Mammary epithelial cell (primary cell): ENCODE measurements at regions of chr12 and their contacts with region 1.

Region 1: DNA sequence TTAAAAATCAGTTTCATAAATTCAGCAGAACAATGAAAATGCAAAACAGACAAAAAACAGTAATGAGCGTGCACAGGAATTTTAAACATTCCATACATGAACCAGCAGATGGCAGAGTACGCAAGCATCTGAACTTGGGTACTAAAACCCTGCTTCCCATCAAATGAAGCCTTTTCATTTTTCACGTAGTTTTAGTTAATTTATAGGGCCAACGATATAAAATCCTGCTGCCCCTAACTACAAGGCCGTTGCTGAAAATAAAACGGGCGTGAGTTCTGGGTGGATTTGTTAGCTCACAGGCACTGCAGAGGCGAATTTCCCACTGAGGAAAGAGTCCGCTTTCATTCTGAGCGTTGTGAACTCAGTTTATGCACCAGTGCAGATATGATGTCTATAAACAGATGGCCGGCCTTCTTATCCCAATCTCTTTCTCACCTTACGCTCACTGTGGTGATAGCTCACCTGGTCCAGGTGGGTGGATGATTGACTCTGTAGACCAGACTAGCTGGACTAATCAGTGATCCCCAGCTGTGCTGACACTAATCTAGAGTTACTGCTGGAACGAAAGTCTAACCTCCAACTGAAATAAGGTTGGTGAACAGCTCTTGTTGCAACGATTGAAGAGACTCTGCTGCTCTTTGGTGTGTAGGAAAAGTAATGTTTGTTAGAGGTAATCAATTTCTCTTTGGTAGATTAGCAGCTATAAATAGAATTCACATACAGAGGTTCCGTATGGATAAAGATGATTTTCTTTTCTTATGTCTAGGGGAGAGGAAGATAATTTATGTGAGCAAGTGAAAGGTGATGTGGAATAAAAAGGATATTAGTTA is 89.2 kb downstream of the PDZRN4 start:
- DNase-seq: peak; percentile 9
- H3K4me3 ChIP-seq: no peak overlapping the region
- H3K27ac ChIP-seq: no peak overlapping the region
- H3K4me1 ChIP-seq: no peaks in the 10 kb centered on the region
- H3K27me3 ChIP-seq: peaks cover 2% of the 10 kb centered on the region
- CTCF ChIP-seq: peak; percentile 66 to 68

Region 2: GRCh38 chr12:41367726-41368405 is 90.5 kb after region 1 on chr12:
- CTCF ChIA-PET with region 1: no interaction called
- dilution Hi-C with region 1: no loop called
- in situ Hi-C with region 1: no loop called
- intact Hi-C with region 1: loop called (anchors 1 kb)
- DNase-seq: no peak
- H3K4me3 ChIP-seq: no peak overlapping the region
- H3K27ac ChIP-seq: no peak overlapping the region
- H3K4me1 ChIP-seq: no peaks in the 10 kb centered on the region
- H3K27me3 ChIP-seq: no peaks in the 10 kb centered on the region
- CTCF ChIP-seq: peak; percentile 45 to 49

Region 3: GRCh38 chr12:41564816-41565215 is 287.5 kb after region 1 on chr12:
- CTCF ChIA-PET with region 1: no interaction called
- dilution Hi-C with region 1: no loop called
- in situ Hi-C with region 1: no loop called
- intact Hi-C with region 1: loop called (anchors 5 kb)
- DNase-seq: no peak
- H3K4me3 ChIP-seq: no peak overlapping the region
- H3K27ac ChIP-seq: no peak overlapping the region
- H3K4me1 ChIP-seq: no peaks in the 10 kb centered on the region
- H3K27me3 ChIP-seq: no peaks in the 10 kb centered on the region
- CTCF ChIP-seq: peak in 1 of 2 donors; percentile 17

Region 4: GRCh38 chr12:41663598-41664258 is 386.4 kb after region 1 on chr12:
- CTCF ChIA-PET with region 1: no interaction called
- dilution Hi-C with region 1: no loop called
- in situ Hi-C with region 1: loop called in 1 of 2 experiments (anchors 25 kb)
- intact Hi-C with region 1: loop called (anchors 1 kb)
- DNase-seq: peak; percentile 3
- H3K4me3 ChIP-seq: no peak overlapping the region
- H3K27ac ChIP-seq: no peak overlapping the region
- H3K4me1 ChIP-seq: no peaks in the 10 kb centered on the region
- H3K27me3 ChIP-seq: no peaks in the 10 kb centered on the region
- CTCF ChIP-seq: peak; percentile 42 to 59